AG04449 (cell line): ENCODE measurements at regions of chr1 and their contacts with region 1.

Region 1: DNA sequence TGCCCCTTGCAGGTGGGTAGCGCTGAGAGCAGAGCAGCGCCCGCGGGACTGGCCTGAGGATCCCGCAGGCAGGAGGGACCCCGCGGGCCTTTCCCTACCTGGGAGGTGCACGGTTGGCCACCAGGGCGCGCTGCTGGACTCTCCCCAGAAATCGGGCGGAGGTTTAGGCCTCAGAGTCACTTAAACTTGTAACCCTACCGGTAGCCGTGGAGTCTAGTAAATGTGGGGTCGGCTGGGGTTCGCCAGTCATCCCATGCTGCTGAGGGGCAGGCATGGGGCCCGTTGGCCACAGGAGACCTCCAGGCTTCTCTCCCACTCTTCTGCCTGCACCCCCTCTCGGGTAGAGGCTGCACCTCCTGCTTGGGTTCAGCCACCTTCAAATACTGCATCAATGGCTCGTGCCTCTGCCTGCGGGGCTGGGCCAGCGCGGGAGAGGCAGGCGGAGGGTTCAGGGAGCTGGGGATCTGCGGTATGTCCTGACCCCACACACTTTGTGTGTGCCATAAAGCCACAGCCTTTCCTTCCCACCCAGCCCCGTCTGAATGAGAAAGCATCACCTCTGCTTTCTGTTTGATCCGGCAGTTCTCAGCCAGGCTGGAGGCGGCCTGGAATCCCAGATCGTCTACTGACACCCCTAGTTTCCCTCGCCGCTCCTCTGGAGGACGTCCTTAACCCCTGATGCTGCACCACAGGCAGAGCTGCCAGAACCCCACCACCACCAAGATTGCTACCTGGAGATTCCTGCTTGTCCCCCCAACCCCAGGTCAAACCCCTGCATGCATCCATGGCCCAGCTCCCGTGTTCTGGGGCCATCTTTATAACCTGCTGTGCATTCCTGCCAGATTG is 12.3 kb upstream of the GSTM4 start:
- DNase-seq: no peak
- H3K4me3 ChIP-seq: no peak overlapping the region
- CTCF ChIP-seq: peak; percentile 94

Region 2: DNA sequence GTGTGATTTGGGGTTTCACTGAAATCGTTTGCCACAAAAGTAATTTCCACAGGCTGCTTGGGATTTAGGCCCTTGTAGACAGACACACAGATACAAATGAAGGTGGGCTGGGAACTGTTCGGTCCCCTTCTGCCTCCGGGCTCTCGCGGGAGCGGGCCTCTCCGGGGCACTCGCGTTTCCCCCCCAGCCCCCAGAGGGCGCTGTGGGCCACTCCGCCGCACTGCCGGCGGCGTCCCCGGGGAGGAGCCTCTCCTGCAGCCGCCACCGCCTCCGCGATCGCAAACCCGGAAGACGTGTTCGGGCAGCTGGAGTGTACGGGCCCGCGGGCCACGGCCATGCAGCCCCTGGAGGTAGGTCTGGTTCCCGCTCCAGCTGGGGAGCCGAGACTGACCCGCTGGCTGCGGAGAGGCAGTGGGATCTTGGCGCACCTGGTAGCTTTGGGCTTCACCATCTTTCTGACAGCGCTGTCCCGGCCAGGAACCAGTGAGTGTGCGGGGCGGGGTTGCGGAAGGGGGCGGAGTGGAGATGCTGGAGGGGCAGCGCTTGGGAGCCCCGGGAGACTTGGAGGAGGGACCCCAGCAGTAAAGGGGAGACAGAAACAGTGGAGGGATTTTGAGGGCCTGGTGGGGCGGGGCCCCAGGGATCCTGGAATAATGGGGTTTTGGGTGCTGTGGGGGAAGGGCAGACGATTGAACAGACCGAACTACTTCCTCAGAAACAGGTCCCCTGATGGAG is 149.6 kb before region 1 on chr1 and contains the start of gene CYB561D1:
- CTCF ChIA-PET with region 1: interaction called, 11 read pairs
- POLR2A ChIA-PET with region 1: no interaction called
- DNase-seq: no peak
- H3K4me3 ChIP-seq: peak within 1 kb of the TSS; percentile 100
- CTCF ChIP-seq: peak; percentile 98

Region 3: DNA sequence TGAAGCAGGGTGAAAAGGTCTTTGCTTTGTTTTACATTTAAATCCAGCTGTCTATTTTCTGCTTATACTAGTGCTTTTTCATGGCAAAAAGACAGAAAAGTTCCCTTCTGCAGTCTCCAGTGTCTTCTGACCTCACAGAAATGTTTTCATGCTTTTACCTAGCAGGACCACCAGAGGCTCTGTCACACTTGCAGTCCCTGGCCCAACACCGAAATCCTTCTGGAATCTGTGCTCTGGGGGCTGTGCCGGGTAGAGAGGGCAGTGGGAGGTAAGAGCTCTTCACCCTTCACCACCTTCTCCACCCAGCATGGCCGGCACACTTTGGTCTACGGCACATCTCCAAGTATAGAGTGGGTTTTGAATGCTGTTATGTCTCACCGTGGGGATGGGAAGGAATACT is 45.0 kb before region 1 on chr1:
- CTCF ChIA-PET with region 1: interaction called, 14 read pairs
- POLR2A ChIA-PET with region 1: no interaction called
- DNase-seq: no peak
- H3K4me3 ChIP-seq: no peak overlapping the region
- CTCF ChIP-seq: no peak

Region 4: GRCh38 chr1:109655601-109656519 is 12.3 kb after region 1 on chr1 and contains the start of gene GSTM4:
- CTCF ChIA-PET with region 1: interaction called, 344 read pairs
- POLR2A ChIA-PET with region 1: no interaction called
- DNase-seq: no peak
- H3K4me3 ChIP-seq: peak within 1 kb of the TSS; percentile 78
- CTCF ChIP-seq: peak; percentile 18

Region 5: GRCh38 chr1:109739738-109740660 is 96.4 kb after region 1 on chr1:
- CTCF ChIA-PET with region 1: interaction called, 10 read pairs
- POLR2A ChIA-PET with region 1: no interaction called
- DNase-seq: no peak
- H3K4me3 ChIP-seq: peak overlapping the region; percentile 76
- CTCF ChIP-seq: no peak

Region 6: GRCh38 chr1:109762821-109763645 is 119.4 kb after region 1 on chr1:
- CTCF ChIA-PET with region 1: interaction called, 830 read pairs
- POLR2A ChIA-PET with region 1: no interaction called
- DNase-seq: no peak
- H3K4me3 ChIP-seq: no peak overlapping the region
- CTCF ChIP-seq: no peak

Region 7: GRCh38 chr1:110011527-110012041 is 368.0 kb after region 1 on chr1:
- CTCF ChIA-PET with region 1: interaction called, 19 read pairs
- POLR2A ChIA-PET with region 1: no interaction called
- DNase-seq: no peak
- H3K4me3 ChIP-seq: no peak overlapping the region
- CTCF ChIP-seq: peak; percentile 61